Cardiac septum (tissue), 1 donor: ENCODE measurements at regions of chr1 and their contacts with region 1.

Region 1: DNA sequence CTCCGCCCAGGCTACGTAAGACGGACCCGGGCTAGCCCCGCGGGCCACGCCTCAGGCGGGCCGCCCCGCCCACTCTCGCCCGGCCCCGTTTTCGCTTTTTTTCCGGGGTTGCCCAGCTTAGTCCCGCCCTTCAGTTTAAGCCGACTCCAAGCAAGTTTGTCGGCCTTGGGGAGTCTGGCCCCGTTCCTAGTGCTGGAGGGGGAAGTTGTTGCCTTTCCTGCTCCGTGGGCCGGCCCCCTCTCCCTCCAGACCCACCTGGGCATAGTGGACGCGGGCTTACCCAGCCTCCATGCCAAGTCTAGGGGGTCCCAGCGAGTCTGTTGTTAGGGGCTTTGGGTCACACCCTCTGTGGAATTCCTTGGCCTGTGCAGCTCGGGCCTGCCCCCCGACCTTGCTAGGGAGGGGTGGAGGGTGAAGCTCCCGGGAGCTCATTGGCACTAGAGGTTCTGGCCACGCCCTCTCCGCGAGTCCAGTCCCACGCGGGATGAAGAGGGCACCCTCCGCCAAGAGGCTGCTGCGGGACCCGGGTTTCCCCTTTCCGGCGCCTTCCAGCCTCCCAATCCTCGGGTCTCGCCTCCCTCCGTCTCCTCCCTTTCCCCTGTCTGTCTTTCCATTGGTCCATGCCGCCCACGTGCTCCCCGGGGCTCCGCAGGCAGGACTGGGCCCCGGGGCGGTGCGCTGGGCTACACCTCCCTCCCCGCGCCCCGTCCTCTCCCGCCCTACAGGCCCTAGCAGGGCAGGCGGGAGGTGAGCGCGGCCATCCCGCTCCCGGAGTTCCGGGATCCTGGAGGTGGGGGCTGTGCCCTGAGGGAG is 3.3 kb downstream of the RUSC1 start:
- DNase-seq: peak; percentile 97

Region 2: DNA sequence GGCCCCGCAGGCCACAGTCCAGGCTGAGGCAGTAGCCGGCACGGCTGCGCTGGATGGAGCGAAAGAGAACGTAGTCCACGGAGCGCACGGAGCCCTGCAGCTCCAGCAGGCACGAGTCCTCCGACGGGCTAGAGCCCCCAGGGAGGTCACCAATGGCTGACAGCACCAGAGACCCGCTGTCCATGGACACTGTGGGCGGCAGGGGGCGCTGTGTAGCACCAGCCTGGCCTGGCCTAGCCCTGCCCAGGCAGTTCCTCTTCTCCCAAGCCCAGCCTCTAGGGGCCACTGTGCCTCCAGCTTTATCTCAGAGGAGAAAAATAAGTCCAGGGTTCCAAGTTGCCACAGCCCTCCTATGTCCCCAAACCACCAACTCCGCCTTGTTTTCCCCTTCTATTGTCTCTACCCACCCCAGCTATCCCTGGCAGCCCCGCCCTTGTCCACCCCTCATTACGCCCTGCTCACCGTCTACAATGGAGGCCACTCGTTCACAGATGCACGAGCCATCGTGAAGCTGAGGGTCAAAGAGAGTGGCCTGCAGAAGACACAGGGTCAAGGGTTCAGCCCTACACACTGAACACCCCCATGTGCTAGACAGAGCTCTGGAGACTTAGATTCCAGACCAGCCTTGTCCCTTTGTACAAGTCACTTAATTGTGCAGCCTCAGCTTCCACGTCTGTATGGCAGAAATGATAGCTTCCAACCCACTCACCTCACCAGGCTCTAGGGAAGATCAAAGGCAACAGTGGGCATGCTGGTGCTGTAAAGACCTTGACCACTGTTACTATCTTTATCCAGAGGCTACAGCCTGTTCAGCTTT is 73.2 kb before region 1 on chr1:
- intact Hi-C with region 1: loop called (anchors 2 kb)
- DNase-seq: peak; percentile 97

Region 3: DNA sequence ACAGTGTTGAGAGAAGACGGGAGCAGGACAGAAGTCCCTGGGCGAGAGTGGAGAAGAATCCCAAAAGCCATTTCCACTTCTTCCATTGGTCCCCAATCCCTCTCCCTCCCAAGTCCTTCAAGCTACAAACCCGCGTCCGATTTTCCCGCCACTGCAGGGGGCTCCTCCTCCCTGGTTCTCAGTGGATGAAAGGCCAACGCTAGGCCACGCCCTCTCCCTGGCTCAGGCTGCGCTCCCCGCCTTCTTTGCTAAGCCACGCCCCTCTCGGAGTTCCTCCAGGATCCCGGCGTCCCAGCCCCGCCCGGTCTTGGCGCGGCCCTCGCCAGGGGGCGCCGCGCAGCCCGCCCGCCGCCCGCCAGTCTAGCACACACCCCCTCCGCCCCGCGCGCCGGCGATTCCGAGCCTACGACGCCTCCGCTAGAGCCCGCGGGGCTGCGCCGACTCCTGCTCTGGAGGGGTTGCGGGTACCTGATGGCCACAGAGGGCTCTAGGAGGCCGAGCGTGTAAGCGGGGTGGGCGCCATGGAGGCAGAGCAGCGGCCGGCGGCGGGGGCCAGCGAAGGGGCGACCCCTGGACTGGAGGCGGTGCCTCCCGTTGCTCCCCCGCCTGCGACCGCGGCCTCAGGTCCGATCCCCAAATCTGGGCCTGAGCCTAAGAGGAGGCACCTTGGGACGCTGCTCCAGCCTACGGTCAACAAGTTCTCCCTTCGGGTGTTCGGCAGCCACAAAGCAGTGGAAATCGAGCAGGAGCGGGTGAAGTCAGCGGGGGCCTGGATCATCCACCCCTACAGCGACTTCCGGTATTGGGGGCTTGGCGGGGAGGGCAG is 46.7 kb before region 1 on chr1 and contains the start of gene HCN3:
- intact Hi-C with region 1: loop called (anchors 1 kb)
- DNase-seq: peak; percentile 99
- total RNA-seq, gene HCN3: 2.2 TPM

Region 4: DNA sequence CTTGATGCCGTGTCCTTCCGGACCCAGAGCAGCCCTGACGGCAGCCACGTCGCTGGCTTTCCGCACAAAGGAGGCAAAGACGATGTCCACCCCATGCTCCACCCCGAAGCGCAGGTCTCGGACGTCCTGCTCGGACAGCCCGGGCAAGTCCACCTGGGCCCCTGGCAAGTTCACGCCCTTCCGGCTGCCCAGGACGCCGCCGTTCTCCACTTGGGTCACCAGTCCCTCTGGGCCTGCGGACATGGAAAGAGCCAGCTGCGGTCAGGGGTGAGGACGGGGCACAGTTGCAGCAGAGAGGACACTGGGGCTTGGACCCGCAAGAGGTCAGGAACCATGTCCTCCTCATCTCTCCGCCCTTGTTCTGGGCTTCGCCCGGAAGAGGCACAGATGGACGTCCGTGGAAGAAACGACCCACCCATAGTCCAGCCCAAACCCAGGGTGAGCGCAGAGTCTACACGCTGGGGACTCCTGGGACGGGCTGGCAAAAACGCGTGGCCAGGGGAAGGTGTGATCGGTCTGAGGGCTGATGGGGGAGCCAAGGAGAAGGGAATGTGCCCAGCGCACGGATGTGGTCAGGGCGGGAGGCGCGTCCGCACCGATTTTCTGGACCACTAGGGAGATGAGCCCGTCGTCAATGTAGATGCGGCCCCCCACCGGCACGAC is 29.4 kb before region 1 on chr1:
- intact Hi-C with region 1: no loop called
- DNase-seq: no peak

Region 5: GRCh38 chr1:155308493-155309422 is 15.2 kb before region 1 on chr1 and contains the start of gene FDPS:
- intact Hi-C with region 1: loop called (anchors 1 kb)
- DNase-seq: peak; percentile 100
- total RNA-seq, gene FDPS: 83.1 TPM

Region 6: GRCh38 chr1:155562581-155563376 is 238.8 kb after region 1 on chr1 and contains the start of gene ASH1L:
- intact Hi-C with region 1: loop called (anchors 2 kb)
- DNase-seq: peak; percentile 98
- total RNA-seq, gene ASH1L: 55.4 TPM

Region 7: GRCh38 chr1:155591770-155592169 is 267.8 kb after region 1 on chr1:
- intact Hi-C with region 1: loop called (anchors 5 kb)
- DNase-seq: no peak